Endothelial cell of umbilical vein (primary cell): ENCODE measurements at regions of chr7 and their contacts with region 1.

Region 1: GRCh38 chr7:85023045-85023712 is 163.7 kb downstream of the SEMA3D start:
- DNase-seq: peak; percentile 69
- H3K4me3 ChIP-seq: no peak overlapping the region
- H3K27ac ChIP-seq: no peak overlapping the region
- H3K4me1 ChIP-seq: peaks cover 12% of the 10 kb centered on the region
- H3K27me3 ChIP-seq: no peaks in the 10 kb centered on the region
- CTCF ChIP-seq: peak; percentile 20 to 29
- POLR2A ChIP-seq: no peak

Region 2: DNA sequence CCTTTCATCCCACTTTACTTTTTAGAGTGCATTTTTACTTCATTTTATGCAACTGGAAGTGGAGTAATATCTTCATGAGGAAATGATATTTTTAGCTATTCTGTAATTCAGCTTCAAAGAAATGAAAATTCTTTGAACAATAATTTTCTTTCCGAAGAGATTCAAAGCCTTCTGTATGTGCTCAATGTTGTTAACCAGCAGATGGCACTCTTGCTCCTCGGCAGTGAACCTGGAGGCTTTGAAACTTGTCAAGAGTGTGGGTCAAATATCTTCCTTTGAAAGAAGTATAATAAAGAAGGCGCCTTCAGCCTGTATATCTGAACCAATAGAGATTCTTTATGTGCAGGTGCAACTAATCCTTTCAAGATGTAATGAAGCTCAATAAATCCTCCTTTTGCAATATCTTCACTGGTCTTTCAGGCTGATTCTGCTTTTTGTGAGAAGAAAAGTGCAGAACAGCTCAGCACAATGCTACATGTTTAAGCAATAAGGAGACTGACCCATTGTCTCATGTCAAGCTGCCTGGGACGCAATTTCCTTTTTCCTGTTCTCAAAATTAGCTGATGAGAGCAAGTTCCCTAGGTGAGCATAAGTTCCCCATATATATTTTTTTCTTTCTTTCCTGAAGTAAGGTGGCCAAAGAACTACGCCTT is 1087.0 kb before region 1 on chr7:
- CTCF ChIA-PET with region 1: interaction called, 302 read pairs
- POLR2A ChIA-PET with region 1: no interaction called
- dilution Hi-C with region 1: no loop called
- intact Hi-C with region 1: loop called (anchors 1 kb)
- DNase-seq: peak; percentile 78
- H3K4me3 ChIP-seq: no peak overlapping the region
- H3K27ac ChIP-seq: no peak overlapping the region
- H3K4me1 ChIP-seq: no peaks in the 10 kb centered on the region
- H3K27me3 ChIP-seq: no peaks in the 10 kb centered on the region
- CTCF ChIP-seq: peak; percentile 76 to 78
- POLR2A ChIP-seq: no peak

Region 3: DNA sequence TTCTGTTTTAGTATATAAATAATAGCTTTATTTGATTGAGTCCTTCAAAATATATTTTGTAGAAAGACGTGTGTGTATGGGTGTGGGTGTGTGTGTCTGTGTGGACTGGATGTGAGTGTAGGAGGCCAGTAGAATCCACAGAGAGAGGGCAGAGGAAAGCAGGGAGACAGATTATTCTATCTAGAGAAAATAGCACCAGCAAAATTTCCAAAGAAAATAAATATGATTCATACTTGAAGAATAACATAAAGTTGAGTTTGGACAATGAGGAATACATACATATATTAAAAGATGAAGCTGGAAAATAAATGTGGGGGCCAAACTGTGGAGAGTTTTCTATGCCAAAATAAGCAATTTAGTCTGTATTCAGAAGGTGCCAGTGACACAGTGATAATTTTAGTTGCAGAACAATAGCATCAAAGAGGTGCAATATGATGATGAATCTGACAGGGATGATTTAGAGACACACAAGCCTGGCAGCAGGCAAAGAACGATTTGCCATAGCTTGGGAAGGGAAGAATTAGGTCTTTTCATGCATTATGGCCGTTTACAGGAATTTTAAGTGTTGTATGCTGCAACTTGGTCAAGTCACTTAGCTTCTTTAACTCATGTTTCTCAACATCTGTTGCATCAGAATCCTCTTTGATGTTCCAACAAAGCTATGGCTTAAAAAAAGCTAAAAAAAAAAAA is 949.8 kb before region 1 on chr7:
- CTCF ChIA-PET with region 1: no interaction called
- POLR2A ChIA-PET with region 1: no interaction called
- dilution Hi-C with region 1: no loop called
- intact Hi-C with region 1: loop called (anchors 10 kb)
- DNase-seq: peak; percentile 75
- H3K4me3 ChIP-seq: no peak overlapping the region
- H3K27ac ChIP-seq: no peak overlapping the region
- H3K4me1 ChIP-seq: peaks cover 9% of the 10 kb centered on the region
- H3K27me3 ChIP-seq: no peaks in the 10 kb centered on the region
- CTCF ChIP-seq: no peak
- POLR2A ChIP-seq: no peak

Region 4: GRCh38 chr7:84188786-84189405 is 834.3 kb before region 1 on chr7:
- CTCF ChIA-PET with region 1: interaction called, 9 read pairs
- POLR2A ChIA-PET with region 1: no interaction called
- dilution Hi-C with region 1: no loop called
- intact Hi-C with region 1: loop called (anchors 1 kb)
- DNase-seq: peak; percentile 66
- H3K4me3 ChIP-seq: no peak overlapping the region
- H3K27ac ChIP-seq: no peak overlapping the region
- H3K4me1 ChIP-seq: peaks cover 7% of the 10 kb centered on the region
- H3K27me3 ChIP-seq: no peaks in the 10 kb centered on the region
- CTCF ChIP-seq: peak; percentile 19 to 36
- POLR2A ChIP-seq: no peak

Region 5: GRCh38 chr7:84336303-84336702 is 686.9 kb before region 1 on chr7:
- CTCF ChIA-PET with region 1: no interaction called
- POLR2A ChIA-PET with region 1: no interaction called
- dilution Hi-C with region 1: no loop called
- intact Hi-C with region 1: loop called (anchors 10 kb)
- DNase-seq: no peak
- H3K4me3 ChIP-seq: no peak overlapping the region
- H3K27ac ChIP-seq: no peak overlapping the region
- H3K4me1 ChIP-seq: no peaks in the 10 kb centered on the region
- H3K27me3 ChIP-seq: no peaks in the 10 kb centered on the region
- CTCF ChIP-seq: no peak
- POLR2A ChIP-seq: no peak

Region 6: DNA sequence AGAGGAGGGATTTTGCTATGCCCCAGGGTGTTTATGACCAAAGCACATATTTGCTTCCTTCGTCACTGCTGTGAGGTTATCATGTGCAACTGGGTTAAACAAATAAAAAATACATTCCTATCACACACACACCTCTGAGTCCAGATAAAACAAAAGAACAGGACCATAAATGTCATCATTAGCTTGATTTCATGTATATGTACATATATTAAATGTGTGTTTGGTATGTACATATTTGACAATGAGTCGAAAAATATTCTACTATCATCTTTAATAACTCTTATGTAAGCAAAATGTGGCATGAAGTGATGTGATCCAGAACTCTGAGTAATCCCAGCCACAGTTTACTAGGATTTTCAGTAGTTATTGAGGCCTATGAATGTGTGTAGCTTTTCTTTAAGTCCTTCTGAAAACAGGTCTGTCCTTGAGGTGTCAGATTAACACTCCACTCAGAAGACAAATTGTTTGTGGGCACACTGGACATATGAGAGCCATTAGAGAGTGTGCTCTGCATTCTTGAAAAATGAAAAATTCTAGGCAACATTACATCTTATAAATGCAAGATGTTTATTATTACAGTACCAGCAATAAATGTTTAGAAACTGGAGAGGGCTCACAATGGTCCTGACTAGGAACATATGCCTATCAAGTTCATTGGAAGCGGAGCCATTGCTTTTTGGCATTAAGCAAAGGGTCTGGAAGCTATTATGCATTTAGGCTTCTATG is 493.5 kb before region 1 on chr7:
- CTCF ChIA-PET with region 1: no interaction called
- POLR2A ChIA-PET with region 1: no interaction called
- dilution Hi-C with region 1: no loop called
- intact Hi-C with region 1: loop called (anchors 5 kb)
- DNase-seq: peak; percentile 75
- H3K4me3 ChIP-seq: no peak overlapping the region
- H3K27ac ChIP-seq: peak overlapping the region; percentile 46
- H3K4me1 ChIP-seq: peaks cover 14% of the 10 kb centered on the region
- H3K27me3 ChIP-seq: no peaks in the 10 kb centered on the region
- CTCF ChIP-seq: no peak
- POLR2A ChIP-seq: no peak

Region 7: GRCh38 chr7:84637568-84638338 is 385.4 kb before region 1 on chr7:
- CTCF ChIA-PET with region 1: interaction called, 5 read pairs
- POLR2A ChIA-PET with region 1: no interaction called
- dilution Hi-C with region 1: no loop called
- intact Hi-C with region 1: loop called (anchors 1 kb)
- DNase-seq: peak; percentile 92
- H3K4me3 ChIP-seq: no peak overlapping the region
- H3K27ac ChIP-seq: peak overlapping the region; percentile 97
- H3K4me1 ChIP-seq: peaks cover 25% of the 10 kb centered on the region
- H3K27me3 ChIP-seq: no peaks in the 10 kb centered on the region
- CTCF ChIP-seq: no peak
- POLR2A ChIP-seq: no peak